ENCODE measurements at regions of chr7 and their contacts with region 1.

Region 1: DNA sequence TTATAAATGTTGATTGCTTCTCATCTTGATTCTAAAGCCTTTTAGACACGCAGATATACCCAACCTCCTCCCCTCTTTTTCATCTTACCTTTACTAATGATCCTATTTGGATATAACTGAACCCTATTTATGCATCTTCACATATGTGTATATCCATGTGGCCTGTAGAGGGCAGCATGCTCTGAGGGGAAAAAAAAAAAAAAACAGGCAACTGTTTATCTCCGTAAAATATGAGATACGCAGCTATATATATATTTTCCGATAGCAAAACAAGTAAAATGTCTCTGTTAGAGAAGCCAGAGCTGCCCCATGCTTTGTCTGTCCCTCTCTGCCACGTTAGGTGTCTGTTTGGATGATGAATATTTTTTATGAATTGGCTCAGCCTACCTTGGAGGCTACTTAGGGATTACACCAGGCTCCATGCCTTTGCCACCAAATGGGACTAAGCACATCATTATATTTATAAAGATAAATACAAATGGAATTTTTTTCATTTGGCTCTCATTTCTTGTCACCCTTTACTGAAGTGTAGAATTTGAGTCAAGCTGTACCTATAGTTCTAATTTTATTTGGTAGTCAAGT is 174.8 kb upstream of the FZD1 start:
- DNase-seq: peak; percentile 17 to 24
- ATAC-seq: peak; percentile 69 to 87; a peak in 5 of 6 replicates
- H3K4me3 ChIP-seq: no peak overlapping the region
- H3K27ac ChIP-seq: no peak overlapping the region
- H3K4me1 ChIP-seq: no peaks in the 10 kb centered on the region
- CTCF ChIP-seq: peak; percentile 86
- EP300 ChIP-seq: no peak
- POLR2A ChIP-seq: no peak
- RAD21 ChIP-seq: peak; percentile 58 to 64

Region 2: DNA sequence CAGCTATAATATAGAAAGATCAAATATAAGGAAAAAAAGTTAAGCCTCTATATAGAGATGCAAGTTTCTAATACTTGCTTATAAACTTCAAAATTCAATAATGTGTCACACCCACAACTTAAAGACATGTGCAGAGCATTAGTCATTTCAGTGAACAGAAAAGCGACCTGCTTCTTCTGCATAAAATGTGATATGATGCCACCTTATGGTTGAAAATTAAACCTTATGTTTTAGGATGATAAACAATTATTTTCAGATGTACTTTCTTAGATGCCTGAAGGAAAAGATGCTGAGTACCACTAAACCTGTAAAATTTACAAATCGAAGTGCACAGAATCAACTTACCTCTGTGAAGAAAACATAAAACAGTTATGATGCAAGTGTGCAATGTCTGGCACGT is 695.0 kb after region 1 on chr7:
- CTCF ChIA-PET with region 1: interaction called, 14 read pairs
- POLR2A ChIA-PET with region 1: no interaction called
- DNase-seq: peak; percentile 26 to 44
- ATAC-seq: peak; percentile 61 to 70; a peak in 4 of 6 replicates
- H3K4me3 ChIP-seq: no peak overlapping the region
- H3K27ac ChIP-seq: no peak overlapping the region
- H3K4me1 ChIP-seq: no peaks in the 10 kb centered on the region
- CTCF ChIP-seq: peak; percentile 60
- EP300 ChIP-seq: no peak
- POLR2A ChIP-seq: no peak
- RAD21 ChIP-seq: peak; percentile 68 to 74